Activated CD4-positive, alpha-beta T cell treated with anti-CD3 and anti-CD28 coated beads for 36 hours (primary cell): ENCODE measurements at regions of chr9 and their contacts with region 1.

Region 1: DNA sequence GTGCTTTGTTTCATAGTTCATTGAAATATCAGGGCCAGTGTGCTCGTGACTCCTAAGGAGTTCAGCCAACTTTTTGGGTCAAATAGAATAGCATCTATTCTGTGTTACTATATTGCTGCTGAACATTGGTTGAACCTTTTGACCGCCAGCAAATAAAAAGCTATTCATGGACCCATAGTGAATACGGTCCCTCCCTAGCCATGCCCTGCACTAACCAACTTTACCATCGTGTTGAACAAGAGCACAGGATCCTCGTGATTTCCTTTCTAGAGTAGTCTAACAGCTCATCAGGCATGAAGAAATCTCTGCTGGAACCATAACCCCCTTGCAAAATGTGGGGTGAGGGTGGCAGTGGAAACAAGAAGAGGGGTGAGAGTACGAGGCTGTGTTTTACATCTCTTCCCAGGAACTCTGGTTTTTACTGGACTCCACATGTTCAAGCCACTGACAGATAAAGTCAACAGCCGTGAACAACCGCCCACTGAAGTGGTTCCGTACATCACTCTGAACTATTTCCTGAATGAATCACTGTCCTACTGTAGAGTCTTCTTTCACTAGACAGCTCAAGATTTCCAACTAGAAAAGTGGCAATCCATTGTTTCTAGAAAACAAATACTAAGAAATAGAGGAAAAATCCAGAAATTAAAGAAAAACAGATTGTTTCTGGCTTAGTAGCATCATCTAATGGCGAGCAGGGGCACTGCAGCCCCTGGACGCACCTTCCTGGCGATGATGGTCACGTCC is 70.1 kb upstream of the SPATA31E1 start:
- DNase-seq: peak; percentile 77
- ATAC-seq: peak; percentile 93
- H3K4me3 Mint-ChIP-seq: no peak overlapping the region
- H3K27ac Mint-ChIP-seq: no peak overlapping the region
- H3K4me1 Mint-ChIP-seq: peaks cover 24% of the 10 kb centered on the region
- H3K27me3 Mint-ChIP-seq: peaks cover 12% of the 10 kb centered on the region

Region 2: DNA sequence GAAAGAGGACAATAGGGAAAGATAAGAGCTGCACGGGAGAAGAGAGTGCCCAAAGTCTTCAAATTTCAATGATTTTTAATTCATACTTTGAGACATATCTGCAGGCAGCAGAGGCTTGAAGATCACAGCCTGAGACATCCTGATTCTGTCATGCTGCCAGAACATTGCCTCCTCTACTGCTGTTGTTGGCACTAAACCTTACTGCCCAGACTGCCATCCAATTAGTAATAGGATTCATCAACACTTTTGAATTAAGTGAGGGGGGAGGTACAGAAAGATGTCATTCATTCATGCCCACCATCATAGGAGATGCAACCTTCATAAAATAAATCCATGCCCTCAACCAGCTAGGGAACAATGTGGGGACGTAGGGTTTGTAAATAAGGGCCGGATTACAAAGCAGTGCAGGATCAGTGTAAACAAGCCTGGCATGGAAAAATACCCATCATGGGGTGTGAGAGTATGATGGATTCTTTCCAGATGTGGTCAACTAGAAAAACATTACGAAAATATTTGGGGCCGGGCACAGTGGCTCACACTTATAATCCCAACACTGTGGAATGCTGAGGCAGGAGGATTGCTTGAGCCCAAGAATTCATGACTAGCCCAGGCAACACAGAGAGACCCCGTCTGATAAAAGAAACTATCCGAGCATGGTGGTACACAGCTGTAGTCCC is 437.0 kb before region 1 on chr9:
- CTCF ChIA-PET with region 1: no interaction called
- POLR2A ChIA-PET with region 1: interaction called, 4 read pairs
- intact Hi-C with region 1: loop called in 1 of 2 experiments (anchors 1 kb)
- DNase-seq: no peak
- ATAC-seq: no peak
- H3K4me3 Mint-ChIP-seq: no peak overlapping the region
- H3K27ac Mint-ChIP-seq: no peak overlapping the region
- H3K4me1 Mint-ChIP-seq: peaks cover 15% of the 10 kb centered on the region
- H3K27me3 Mint-ChIP-seq: peaks cover 37% of the 10 kb centered on the region

Region 3: GRCh38 chr9:87535817-87536539 is 276.6 kb before region 1 on chr9:
- CTCF ChIA-PET with region 1: no interaction called
- POLR2A ChIA-PET with region 1: no interaction called
- intact Hi-C with region 1: loop called in 1 of 2 experiments (anchors 1 kb)
- DNase-seq: peak; percentile 69
- ATAC-seq: peak; percentile 84
- H3K4me3 Mint-ChIP-seq: peak overlapping the region; percentile 5
- H3K27ac Mint-ChIP-seq: peak overlapping the region; percentile 91
- H3K4me1 Mint-ChIP-seq: peaks cover 13% of the 10 kb centered on the region
- H3K27me3 Mint-ChIP-seq: no peaks in the 10 kb centered on the region

Region 4: DNA sequence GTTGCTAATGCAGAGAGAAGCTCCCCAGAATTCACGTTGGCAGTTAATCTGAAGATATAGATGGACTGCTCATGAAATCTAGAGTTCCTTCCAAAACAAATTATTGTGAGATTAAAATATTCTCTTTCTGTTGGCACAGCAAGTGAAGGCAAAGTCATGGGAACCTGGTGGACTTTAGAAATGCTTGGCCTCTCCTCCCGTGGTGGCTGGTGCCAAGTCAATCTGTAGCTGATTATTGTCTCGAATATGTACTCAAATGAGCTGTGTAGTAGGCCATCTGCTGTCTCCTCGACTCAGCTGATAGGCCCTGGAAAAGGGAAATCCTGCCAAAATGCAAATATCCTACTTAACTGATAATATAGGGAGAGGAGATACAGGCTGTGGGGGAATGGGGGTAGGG is 245.5 kb before region 1 on chr9:
- CTCF ChIA-PET with region 1: no interaction called
- POLR2A ChIA-PET with region 1: no interaction called
- intact Hi-C with region 1: no loop called
- DNase-seq: no peak
- ATAC-seq: no peak
- H3K4me3 Mint-ChIP-seq: no peak overlapping the region
- H3K27ac Mint-ChIP-seq: no peak overlapping the region
- H3K4me1 Mint-ChIP-seq: no peaks in the 10 kb centered on the region
- H3K27me3 Mint-ChIP-seq: peaks cover 2% of the 10 kb centered on the region

Region 5: DNA sequence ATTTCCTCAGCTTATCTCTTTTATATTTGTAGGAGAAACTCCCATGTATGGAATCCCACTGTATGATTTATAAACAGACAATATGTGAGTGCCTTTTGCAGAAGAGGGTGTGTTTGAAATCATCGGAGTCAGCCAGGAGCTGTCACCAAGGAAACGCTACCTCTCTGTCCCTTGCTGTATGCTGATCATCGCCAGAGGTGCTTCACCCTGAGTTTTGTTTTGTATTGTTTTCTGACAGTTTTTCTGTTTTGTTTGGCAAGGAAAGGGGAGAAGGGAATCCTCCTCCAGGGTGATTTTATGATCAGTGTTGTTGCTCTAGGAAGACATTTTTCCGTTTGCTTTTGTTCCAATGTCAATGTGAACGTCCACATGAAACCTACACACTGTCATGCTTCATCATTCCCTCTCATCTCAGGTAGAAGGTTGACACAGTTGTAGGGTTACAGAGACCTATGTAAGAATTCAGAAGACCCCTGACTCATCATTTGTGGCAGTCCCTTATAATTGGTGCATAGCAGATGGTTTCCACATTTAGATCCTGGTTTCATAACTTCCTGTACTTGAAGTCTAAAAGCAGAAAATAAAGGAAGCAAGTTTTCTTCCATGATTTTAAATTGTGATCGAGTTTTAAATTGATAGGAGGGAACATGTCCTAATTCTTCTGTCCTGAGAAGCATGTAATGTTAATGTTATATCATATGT is 104.6 kb before region 1 on chr9:
- CTCF ChIA-PET with region 1: no interaction called
- POLR2A ChIA-PET with region 1: interaction called, 5 read pairs
- intact Hi-C with region 1: loop called (anchors 1 to 5 kb)
- DNase-seq: peak; percentile 31
- ATAC-seq: peak; percentile 40
- H3K4me3 Mint-ChIP-seq: no peak overlapping the region
- H3K27ac Mint-ChIP-seq: no peak overlapping the region
- H3K4me1 Mint-ChIP-seq: peaks cover 44% of the 10 kb centered on the region
- H3K27me3 Mint-ChIP-seq: peaks cover 5% of the 10 kb centered on the region

Region 6: GRCh38 chr9:87792831-87793288 is 19.7 kb before region 1 on chr9:
- CTCF ChIA-PET with region 1: interaction called, 3 read pairs
- POLR2A ChIA-PET with region 1: no interaction called
- intact Hi-C with region 1: loop called in 1 of 2 experiments (anchors 1 kb)
- DNase-seq: peak; percentile 72
- ATAC-seq: peak; percentile 94
- H3K4me3 Mint-ChIP-seq: no peak overlapping the region
- H3K27ac Mint-ChIP-seq: peak overlapping the region; percentile 48
- H3K4me1 Mint-ChIP-seq: peaks cover 26% of the 10 kb centered on the region
- H3K27me3 Mint-ChIP-seq: peaks cover 4% of the 10 kb centered on the region

Region 7: GRCh38 chr9:88310310-88310995 is 497.9 kb after region 1 on chr9:
- CTCF ChIA-PET with region 1: no interaction called
- POLR2A ChIA-PET with region 1: no interaction called
- intact Hi-C with region 1: loop called in 1 of 2 experiments (anchors 2 kb)
- DNase-seq: no peak
- ATAC-seq: no peak
- H3K4me3 Mint-ChIP-seq: no peak overlapping the region
- H3K27ac Mint-ChIP-seq: peak overlapping the region; percentile 25
- H3K4me1 Mint-ChIP-seq: peaks cover 31% of the 10 kb centered on the region
- H3K27me3 Mint-ChIP-seq: peaks cover 6% of the 10 kb centered on the region